ENCODE measurements at regions of chr12 and their contacts with region 1.

Region 1: GRCh38 chr12:107884769-107885694 is 110.5 kb downstream of the ASCL4 start:
- DNase-seq: peak in 1 of 2 donors; percentile 66
- H3K4me3 ChIP-seq: no peak overlapping the region
- H3K27ac ChIP-seq: no peak overlapping the region
- H3K4me1 ChIP-seq: no peaks in the 10 kb centered on the region
- H3K27me3 ChIP-seq: no peaks in the 10 kb centered on the region
- CTCF ChIP-seq: peak; percentile 51 to 64 (median 53)

Region 2: GRCh38 chr12:107677671-107678070 is 207.4 kb before region 1 on chr12:
- intact Hi-C with region 1: loop called (anchors 2 kb)
- DNase-seq: no peak
- H3K4me3 ChIP-seq: no peak overlapping the region
- H3K27ac ChIP-seq: no peak overlapping the region
- H3K4me1 ChIP-seq: no peaks in the 10 kb centered on the region
- H3K27me3 ChIP-seq: no peaks in the 10 kb centered on the region
- CTCF ChIP-seq: no peak

Region 3: DNA sequence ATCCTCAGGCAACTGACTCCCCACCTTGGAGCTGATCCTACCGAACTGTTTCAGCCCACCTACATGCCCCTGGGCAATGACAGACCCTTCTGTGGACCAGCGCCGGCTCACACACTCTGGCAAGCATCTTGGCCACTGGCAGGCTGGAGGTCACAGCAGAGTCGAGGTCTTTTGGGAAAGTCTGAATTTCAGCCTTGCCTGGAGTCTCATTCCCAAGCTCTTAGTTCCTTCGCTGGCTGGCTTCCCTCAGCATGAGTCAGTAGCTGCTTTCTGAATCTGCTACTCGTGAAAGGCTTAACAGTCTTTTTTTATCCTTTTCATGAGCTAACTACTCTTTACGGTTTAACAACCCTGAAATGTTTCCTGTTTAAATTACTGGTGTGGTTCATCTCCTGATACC is 66.0 kb before region 1 on chr12:
- intact Hi-C with region 1: no loop called
- DNase-seq: peak in 1 of 2 donors; percentile 71
- H3K4me3 ChIP-seq: no peak overlapping the region
- H3K27ac ChIP-seq: peak overlapping the region; percentile 5 to 25
- H3K4me1 ChIP-seq: no peaks in the 10 kb centered on the region
- H3K27me3 ChIP-seq: no peaks in the 10 kb centered on the region
- CTCF ChIP-seq: no peak

Measured in ascending aorta (tissue), 2 donors.